Activated CD4-positive, alpha-beta memory T cell treated with anti-CD3 and anti-CD28 coated beads for 36 hours (primary cell): ENCODE measurements at regions of chr4 and their contacts with region 1.

Region 1: GRCh38 chr4:1726146-1726934 is 5.0 kb downstream of the TACC3 start:
- DNase-seq: peak; percentile 92
- H3K4me3 Mint-ChIP-seq: no peak overlapping the region
- H3K27ac Mint-ChIP-seq: peak overlapping the region; percentile 61
- H3K4me1 Mint-ChIP-seq: peaks cover 72% of the 10 kb centered on the region
- H3K27me3 Mint-ChIP-seq: no peaks in the 10 kb centered on the region

Region 2: GRCh38 chr4:1448602-1449420 is 277.5 kb before region 1 on chr4:
- CTCF ChIA-PET with region 1: no interaction called
- POLR2A ChIA-PET with region 1: no interaction called
- intact Hi-C with region 1: no loop called
- DNase-seq: no peak
- H3K4me3 Mint-ChIP-seq: no peak overlapping the region
- H3K27ac Mint-ChIP-seq: no peak overlapping the region
- H3K4me1 Mint-ChIP-seq: no peaks in the 10 kb centered on the region
- H3K27me3 Mint-ChIP-seq: no peaks in the 10 kb centered on the region

Region 3: DNA sequence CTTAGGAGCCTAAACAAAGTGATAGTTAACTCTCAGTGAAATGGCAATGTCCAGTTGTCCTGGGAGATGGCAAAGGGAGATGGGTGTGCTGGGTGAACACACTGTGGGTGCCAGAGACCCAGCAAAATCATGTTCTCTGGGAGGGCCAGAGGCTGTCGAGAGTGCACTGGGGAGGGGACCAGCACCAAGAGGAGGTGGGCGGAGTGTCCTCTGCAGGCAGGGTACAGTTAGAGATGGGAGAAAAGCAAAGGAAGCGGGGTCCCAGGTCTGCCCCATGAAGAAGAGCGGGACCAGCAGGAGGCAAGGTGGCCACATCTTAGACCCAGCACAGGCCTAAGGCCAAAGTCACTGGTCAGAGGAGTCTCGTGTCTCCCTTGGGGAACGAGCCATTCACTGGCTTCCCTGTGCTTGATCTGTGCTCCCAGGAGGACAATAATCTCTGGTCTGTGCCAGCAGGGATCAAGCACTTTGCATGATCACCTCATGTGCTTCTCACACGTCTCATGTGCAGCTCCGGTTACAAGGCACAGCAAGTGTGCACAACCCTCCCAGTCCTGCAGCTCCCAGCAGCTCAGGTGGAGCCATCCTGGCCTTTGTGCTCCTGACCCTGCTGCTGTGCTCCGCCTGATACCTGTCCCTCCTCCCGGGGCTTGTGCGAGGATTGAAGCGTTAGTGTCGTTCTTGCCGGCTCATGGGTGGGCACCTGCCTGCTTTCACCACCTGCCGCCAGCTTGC is 143.1 kb before region 1 on chr4:
- CTCF ChIA-PET with region 1: no interaction called
- POLR2A ChIA-PET with region 1: no interaction called
- intact Hi-C with region 1: no loop called
- DNase-seq: no peak
- H3K4me3 Mint-ChIP-seq: no peak overlapping the region
- H3K27ac Mint-ChIP-seq: no peak overlapping the region
- H3K4me1 Mint-ChIP-seq: peaks cover 4% of the 10 kb centered on the region
- H3K27me3 Mint-ChIP-seq: no peaks in the 10 kb centered on the region

Region 4: GRCh38 chr4:1712216-1713002 is 13.9 kb before region 1 on chr4 and contains the start of gene SLBP:
- CTCF ChIA-PET with region 1: interaction called, 15 read pairs
- POLR2A ChIA-PET with region 1: interaction called, 56 read pairs
- intact Hi-C with region 1: loop called (anchors 1 kb)
- DNase-seq: peak; percentile 99
- H3K4me3 Mint-ChIP-seq: peak within 1 kb of the TSS; percentile 99
- H3K27ac Mint-ChIP-seq: peak within 1 kb of the TSS; percentile 94
- H3K4me1 Mint-ChIP-seq: peaks cover 61% of the 10 kb centered on the region
- H3K27me3 Mint-ChIP-seq: no peaks in the 10 kb centered on the region
- total RNA-seq, gene SLBP: 103 to 106 TPM

Region 5: GRCh38 chr4:1754336-1754735 is 28.0 kb after region 1 on chr4:
- CTCF ChIA-PET with region 1: no interaction called
- POLR2A ChIA-PET with region 1: no interaction called
- intact Hi-C with region 1: no loop called
- DNase-seq: no peak
- H3K4me3 Mint-ChIP-seq: no peak overlapping the region
- H3K27ac Mint-ChIP-seq: no peak overlapping the region
- H3K4me1 Mint-ChIP-seq: no peaks in the 10 kb centered on the region
- H3K27me3 Mint-ChIP-seq: no peaks in the 10 kb centered on the region